ENCODE measurements at regions of chr16 and their contacts with region 1.

Region 1: DNA sequence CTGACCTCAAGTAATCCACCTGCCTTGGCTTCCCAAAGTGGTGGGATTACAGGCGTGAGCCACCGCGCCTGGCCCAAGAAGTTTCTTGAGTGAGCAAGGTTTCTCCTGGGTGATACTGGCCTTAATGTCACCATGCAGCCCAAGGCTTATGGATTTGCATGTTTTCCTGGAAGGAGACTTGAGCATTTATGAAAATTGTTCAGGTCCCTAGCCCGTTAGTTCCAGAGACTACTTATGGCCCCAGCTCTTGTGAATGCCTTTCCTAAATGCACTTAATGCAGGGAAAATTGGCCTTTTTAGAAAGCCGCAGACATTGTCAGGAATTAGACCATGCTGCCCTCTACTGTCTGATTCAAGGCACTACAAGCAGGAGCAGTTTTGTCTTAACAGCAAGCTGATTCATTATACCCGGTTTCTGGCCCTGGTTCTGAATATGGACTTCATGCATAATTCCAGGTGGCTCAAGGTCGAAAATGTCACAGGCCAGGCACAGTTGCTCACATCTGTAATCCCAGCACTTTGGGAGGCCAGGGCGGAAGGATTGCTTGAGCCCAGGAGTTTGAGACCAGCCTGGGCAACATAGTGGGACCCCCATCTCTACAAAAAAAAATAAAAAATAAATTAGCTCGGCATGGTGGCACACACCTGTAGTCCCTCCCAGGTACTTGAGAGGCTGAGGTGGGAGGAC is 91.3 kb downstream of the SNX29 start:
- DNase-seq: peak; percentile 17 to 76 (median 68)
- ATAC-seq: peak; percentile 89
- H3K4me3 ChIP-seq: no peak overlapping the region
- H3K4me3 Mint-ChIP-seq: no peak overlapping the region
- H3K27ac ChIP-seq: no peak overlapping the region
- H3K27ac Mint-ChIP-seq: peak overlapping the region in 3 of 9 donors; percentile 51 to 64 (median 52)
- H3K4me1 ChIP-seq: no peaks in the 10 kb centered on the region
- H3K4me1 Mint-ChIP-seq: peaks cover 0 to 6% (median 5%) of the 10 kb centered on the region in 7 donors
- H3K27me3 ChIP-seq: no peaks in the 10 kb centered on the region
- H3K27me3 Mint-ChIP-seq: no peaks in the 10 kb centered on the region

Region 2: DNA sequence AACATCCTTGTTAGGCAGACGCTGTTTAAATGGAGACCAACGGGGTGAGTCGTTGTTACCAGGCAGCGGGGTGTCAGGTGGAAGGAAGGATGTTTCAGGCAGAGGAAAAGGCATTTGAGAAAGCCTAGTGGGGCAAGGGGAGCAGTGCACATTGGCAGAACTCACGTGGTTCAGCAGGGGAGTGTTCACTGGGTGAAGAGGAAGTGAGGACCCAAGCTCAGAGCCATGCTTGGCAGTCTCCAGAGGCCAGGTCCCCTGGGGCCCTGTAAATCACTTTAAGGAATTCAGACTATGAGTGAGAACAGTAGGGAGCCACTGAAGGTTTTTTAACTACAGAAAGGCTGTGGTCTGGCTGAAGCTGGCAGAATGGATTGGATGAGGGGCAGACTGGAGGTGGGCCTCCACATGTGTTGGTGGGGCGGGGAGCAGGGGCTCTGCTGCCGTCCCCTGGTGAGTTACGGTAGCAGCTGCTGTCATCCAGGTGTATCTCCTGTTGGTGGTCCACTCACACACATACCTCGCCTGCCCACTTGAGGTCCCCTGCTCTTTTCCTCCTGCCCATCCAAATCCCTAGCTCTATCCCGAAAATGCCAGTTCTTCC is 1118.4 kb before region 1 on chr16:
- CTCF ChIA-PET with region 1: no interaction called
- POLR2A ChIA-PET with region 1: no interaction called
- intact Hi-C with region 1: loop called in 1 of 2 experiments (anchors 5 kb)
- DNase-seq: peak in 7 of 9 donors; percentile 41 to 69 (median 64)
- ATAC-seq: peak; percentile 83
- H3K4me3 ChIP-seq: no peak overlapping the region
- H3K4me3 Mint-ChIP-seq: peak overlapping the region in 9 of 10 donors; percentile 41 to 73 (median 60)
- H3K27ac ChIP-seq: peak overlapping the region; percentile 52
- H3K27ac Mint-ChIP-seq: peak overlapping the region; percentile 45 to 90 (median 76)
- H3K4me1 ChIP-seq: peaks cover 15 to 40% of the 10 kb centered on the region in 2 donors
- H3K4me1 Mint-ChIP-seq: peaks cover 31 to 78% (median 64%) of the 10 kb centered on the region in 7 donors
- H3K27me3 ChIP-seq: no peaks in the 10 kb centered on the region
- H3K27me3 Mint-ChIP-seq: no peaks in the 10 kb centered on the region

Region 3: GRCh38 chr16:11407047-11407982 is 660.5 kb before region 1 on chr16:
- CTCF ChIA-PET with region 1: no interaction called
- POLR2A ChIA-PET with region 1: no interaction called
- intact Hi-C with region 1: loop called in 1 of 2 experiments (anchors 2 kb)
- DNase-seq: peak; percentile 44 to 78 (median 66)
- ATAC-seq: peak; percentile 85
- H3K4me3 ChIP-seq: no peak overlapping the region
- H3K4me3 Mint-ChIP-seq: no peak overlapping the region
- H3K27ac ChIP-seq: no peak overlapping the region
- H3K27ac Mint-ChIP-seq: peak overlapping the region in 2 of 9 donors; percentile 16 to 72
- H3K4me1 ChIP-seq: no peaks in the 10 kb centered on the region
- H3K4me1 Mint-ChIP-seq: peaks cover 0 to 5% (median 4%) of the 10 kb centered on the region in 7 donors
- H3K27me3 ChIP-seq: no peaks in the 10 kb centered on the region
- H3K27me3 Mint-ChIP-seq: no peaks in the 10 kb centered on the region

Region 4: GRCh38 chr16:11715246-11715947 is 352.5 kb before region 1 on chr16:
- CTCF ChIA-PET with region 1: no interaction called
- POLR2A ChIA-PET with region 1: interaction called, 3 read pairs
- intact Hi-C with region 1: loop called in 1 of 2 experiments (anchors 1 kb)
- DNase-seq: no peak
- ATAC-seq: no peak
- H3K4me3 ChIP-seq: no peak overlapping the region
- H3K4me3 Mint-ChIP-seq: no peak overlapping the region
- H3K27ac ChIP-seq: no peak overlapping the region
- H3K27ac Mint-ChIP-seq: peak overlapping the region in 5 of 9 donors; percentile 6 to 79 (median 48)
- H3K4me1 ChIP-seq: peaks cover 0 to 3% of the 10 kb centered on the region in 2 donors
- H3K4me1 Mint-ChIP-seq: peaks cover 4 to 38% (median 22%) of the 10 kb centered on the region in 7 donors
- H3K27me3 ChIP-seq: no peaks in the 10 kb centered on the region
- H3K27me3 Mint-ChIP-seq: no peaks in the 10 kb centered on the region

Region 5: DNA sequence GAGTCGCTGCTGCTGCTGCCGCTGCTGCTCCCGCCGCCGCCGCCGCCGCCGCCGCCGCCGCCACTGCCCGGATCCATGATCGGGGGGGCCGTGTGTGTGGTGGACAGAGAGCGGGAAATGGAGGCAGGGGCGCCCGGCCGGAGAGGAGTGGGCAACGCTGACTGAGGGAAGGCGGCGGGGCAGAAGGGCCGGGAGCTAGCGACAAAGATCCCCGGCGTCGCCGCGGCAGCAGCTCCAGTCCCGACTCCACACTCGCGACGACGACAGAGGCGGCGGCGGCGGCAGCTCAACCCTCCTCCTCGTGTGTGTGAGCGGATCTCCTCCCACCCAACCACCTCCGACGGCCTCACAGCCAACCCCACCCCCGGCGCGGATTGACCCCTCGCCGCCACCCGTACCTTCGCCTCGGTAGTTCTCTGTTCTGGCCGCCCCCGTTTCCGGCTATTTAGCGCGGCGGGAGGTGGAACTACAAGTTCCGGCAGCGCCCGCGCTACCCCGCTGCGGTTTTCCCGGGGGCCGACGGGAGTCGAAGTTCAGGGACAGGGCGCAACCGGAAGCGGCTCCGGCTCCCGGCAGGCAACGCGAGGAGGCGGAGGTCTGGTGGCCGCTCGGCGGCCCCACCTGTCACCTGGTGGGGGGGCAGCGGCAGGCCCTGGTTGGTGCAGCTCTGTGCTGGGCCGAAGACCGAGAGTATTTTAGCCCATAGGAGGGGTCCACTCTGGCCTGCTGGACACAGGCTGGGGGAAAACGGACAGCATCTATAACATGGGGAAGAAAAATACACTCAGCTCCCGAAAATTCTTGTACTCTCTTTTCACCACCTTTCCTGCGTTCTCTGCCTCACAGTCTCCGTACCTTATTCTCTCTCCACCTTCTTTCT is 152.0 kb before region 1 on chr16 and contains the start of gene GSPT1:
- CTCF ChIA-PET with region 1: interaction called, 5 read pairs
- POLR2A ChIA-PET with region 1: interaction called, 4 read pairs
- intact Hi-C with region 1: loop called in 1 of 2 experiments (anchors 1 kb)
- DNase-seq: peak; percentile 96 to 100 (median 99)
- ATAC-seq: peak; percentile 94
- H3K4me3 ChIP-seq: peak within 1 kb of the TSS; percentile 74
- H3K4me3 Mint-ChIP-seq: peak within 1 kb of the TSS; percentile 85 to 99 (median 96)
- H3K27ac ChIP-seq: peak within 1 kb of the TSS; percentile 87
- H3K27ac Mint-ChIP-seq: peak within 1 kb of the TSS; percentile 87 to 98 (median 95)
- H3K4me1 ChIP-seq: peaks cover 13 to 24% of the 10 kb centered on the region in 2 donors
- H3K4me1 Mint-ChIP-seq: peaks cover 23 to 37% (median 34%) of the 10 kb centered on the region in 7 donors
- H3K27me3 ChIP-seq: no peaks in the 10 kb centered on the region
- H3K27me3 Mint-ChIP-seq: peaks cover 0 to 10% (median 0%) of the 10 kb centered on the region in 5 donors
- total RNA-seq, gene GSPT1: 92.8 to 148 (median 101) TPM

Region 6: DNA sequence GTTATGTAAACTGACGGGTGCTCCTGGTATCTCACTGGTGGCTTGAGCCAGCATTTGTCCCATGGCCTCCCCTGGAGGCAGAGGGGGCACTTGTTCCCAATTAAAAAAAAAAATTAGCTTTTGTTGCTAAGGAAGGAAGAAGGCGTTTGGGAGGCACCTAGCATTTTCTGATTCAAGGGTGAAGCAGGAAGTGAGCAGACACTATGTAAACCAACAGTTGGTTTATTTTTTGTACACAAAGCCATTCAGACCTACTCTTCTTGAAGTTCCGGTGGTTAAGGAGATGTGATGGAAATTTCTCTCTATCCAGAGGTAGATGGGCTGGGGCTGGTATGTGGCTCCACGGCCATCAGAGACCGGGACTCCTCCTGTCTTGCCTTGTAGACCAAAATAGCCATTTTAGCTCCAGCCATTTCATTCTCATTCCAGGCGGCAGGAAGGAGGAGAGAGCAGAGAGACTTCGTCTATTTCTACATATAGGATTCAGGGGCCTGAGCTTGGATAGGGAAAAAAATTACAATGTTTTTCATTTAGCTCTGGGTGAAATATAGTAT is 11.6 kb after region 1 on chr16:
- CTCF ChIA-PET with region 1: interaction called, 9 read pairs
- POLR2A ChIA-PET with region 1: interaction called, 14 read pairs
- intact Hi-C with region 1: no loop called
- DNase-seq: peak in 5 of 9 donors; percentile 42 to 61 (median 52)
- ATAC-seq: peak; percentile 34
- H3K4me3 ChIP-seq: peak overlapping the region; percentile 24
- H3K4me3 Mint-ChIP-seq: peak overlapping the region; percentile 54 to 94 (median 78)
- H3K27ac ChIP-seq: peak overlapping the region; percentile 84
- H3K27ac Mint-ChIP-seq: peak overlapping the region; percentile 88 to 97 (median 96)
- H3K4me1 ChIP-seq: peaks cover 40 to 66% of the 10 kb centered on the region in 2 donors
- H3K4me1 Mint-ChIP-seq: peaks cover 34 to 93% (median 77%) of the 10 kb centered on the region in 7 donors
- H3K27me3 ChIP-seq: no peaks in the 10 kb centered on the region
- H3K27me3 Mint-ChIP-seq: no peaks in the 10 kb centered on the region